Right ventricle myocardium inferior (tissue), 1 donor: ENCODE measurements at regions of chr9 and their contacts with region 1.

Region 1: GRCh38 chr9:93612796-93613154 is 36.4 kb downstream of the PHF2 start:
- DNase-seq: no peak
- ATAC-seq: no peak

Region 2: GRCh38 chr9:93595861-93596365 is 16.9 kb before region 1 on chr9:
- intact Hi-C with region 1: loop called (anchors 1 kb)
- DNase-seq: no peak
- ATAC-seq: no peak

Region 3: GRCh38 chr9:93893899-93894690 is 281.3 kb after region 1 on chr9:
- intact Hi-C with region 1: no loop called
- DNase-seq: no peak
- ATAC-seq: peak; percentile 17